Dorsolateral prefrontal cortex (tissue), 120 donors: ENCODE measurements at regions of chr1 and their contacts with region 1.

Region 1: GRCh38 chr1:39973503-39974135 is 18.7 kb downstream of the MFSD2A start:
- DNase-seq: peak; percentile 71 to 88 (median 80)
- H3K4me3 ChIP-seq: peak overlapping the region in 21 of 59 donors; percentile 5 to 55 (median 25)
- H3K27ac ChIP-seq: no peak overlapping the region
- H3K27me3 ChIP-seq: no peaks in the 10 kb centered on the region
- CTCF ChIP-seq: peak; percentile 93 to 100 (median 98)

Region 2: DNA sequence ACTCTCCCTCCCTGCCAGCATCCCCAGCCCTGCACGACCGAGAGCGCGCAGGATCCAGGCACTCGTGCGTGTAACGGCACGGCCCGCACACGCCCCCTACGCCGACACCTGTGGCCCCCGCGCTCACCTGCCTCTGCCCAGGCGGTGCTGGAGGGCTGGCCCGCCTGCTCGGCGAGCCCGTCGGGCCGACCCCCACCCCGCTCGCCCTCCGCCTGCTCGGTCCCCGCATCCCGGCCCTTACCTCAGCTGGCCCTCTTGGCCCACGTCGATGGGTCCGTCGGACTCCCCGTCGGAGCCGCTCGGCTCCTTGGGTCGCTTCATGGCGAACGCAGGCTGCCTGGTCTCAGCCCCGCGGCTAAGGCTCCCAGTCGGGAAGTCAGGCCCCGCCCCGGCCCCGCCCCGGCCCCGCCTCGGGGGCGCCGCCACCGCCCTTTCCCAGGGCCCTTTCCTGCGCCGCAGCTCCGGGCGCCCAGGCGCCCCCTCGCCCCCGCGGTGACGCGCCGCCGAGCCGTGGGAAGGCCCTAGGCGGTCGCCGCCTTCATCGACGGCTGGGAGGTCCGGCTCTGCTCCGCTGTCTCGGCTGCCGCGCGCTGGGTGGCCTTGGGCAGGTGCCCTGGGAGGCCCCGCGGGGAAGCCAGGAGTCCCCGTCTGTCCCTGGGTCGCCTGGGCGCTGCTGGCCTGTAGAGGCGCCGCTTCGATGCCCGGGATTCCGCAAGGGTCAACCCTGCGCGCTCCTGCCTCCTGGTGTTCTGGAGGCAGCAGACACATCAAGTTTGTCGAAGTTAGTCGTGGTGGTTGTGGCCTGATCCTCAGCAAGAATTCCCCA is 334.1 kb before region 1 on chr1 and contains the start of gene HEYL:
- intact Hi-C with region 1: no loop called
- DNase-seq: no peak
- H3K4me3 ChIP-seq: peak within 1 kb of the TSS in 55 of 59 donors; percentile 1 to 61 (median 41)
- H3K27ac ChIP-seq: peak within 1 kb of the TSS in 24 of 59 donors; percentile 3 to 70 (median 46)
- H3K27me3 ChIP-seq: peaks cover 0 to 38% (median 10%) of the 10 kb centered on the region in 45 donors
- CTCF ChIP-seq: peak in 14 of 56 donors; percentile 10 to 41 (median 18)
- total RNA-seq, gene HEYL: 1.6 to 14.9 (median 4.3) TPM

Region 3: GRCh38 chr1:39788758-39789570 is 184.7 kb before region 1 on chr1 and contains the start of gene BMP8B:
- intact Hi-C with region 1: no loop called
- DNase-seq: peak in 9 of 10 donors; percentile 19 to 67 (median 42)
- H3K4me3 ChIP-seq: peak within 1 kb of the TSS in 58 of 59 donors; percentile 28 to 71 (median 56)
- H3K27ac ChIP-seq: peak within 1 kb of the TSS in 12 of 59 donors; percentile 0 to 90 (median 70)
- H3K27me3 ChIP-seq: peaks cover 0 to 24% (median 7%) of the 10 kb centered on the region in 45 donors
- CTCF ChIP-seq: no peak
- total RNA-seq, gene BMP8B: 0.96 to 8.4 (median 3.1) TPM

Region 4: GRCh38 chr1:39816415-39817090 is 157.1 kb before region 1 on chr1:
- intact Hi-C with region 1: loop called (anchors 1 kb)
- DNase-seq: peak in 9 of 10 donors; percentile 46 to 78 (median 64)
- H3K4me3 ChIP-seq: no peak overlapping the region
- H3K27ac ChIP-seq: no peak overlapping the region
- H3K27me3 ChIP-seq: no peaks in the 10 kb centered on the region
- CTCF ChIP-seq: peak; percentile 59 to 91 (median 84)

Region 5: GRCh38 chr1:39901698-39902459 is 71.7 kb before region 1 on chr1 and contains the start of gene MYCL:
- intact Hi-C with region 1: loop called in 1 of 2 experiments (anchors 5 kb)
- DNase-seq: peak; percentile 59 to 82 (median 78)
- H3K4me3 ChIP-seq: peak within 1 kb of the TSS; percentile 57 to 88 (median 75)
- H3K27ac ChIP-seq: peak within 1 kb of the TSS in 31 of 59 donors; percentile 0 to 78 (median 42)
- H3K27me3 ChIP-seq: no peaks in the 10 kb centered on the region
- CTCF ChIP-seq: peak in 55 of 56 donors; percentile 45 to 86 (median 70)
- total RNA-seq, gene MYCL: 0.88 to 5.6 (median 2.3) TPM

Region 6: GRCh38 chr1:39919545-39919944 is 54.1 kb before region 1 on chr1:
- intact Hi-C with region 1: loop called (anchors 1 to 5 kb)
- DNase-seq: peak in 6 of 10 donors; percentile 35 to 56 (median 46)
- H3K4me3 ChIP-seq: no peak overlapping the region
- H3K27ac ChIP-seq: no peak overlapping the region
- H3K27me3 ChIP-seq: no peaks in the 10 kb centered on the region
- CTCF ChIP-seq: peak; percentile 48 to 80 (median 66)

Region 7: GRCh38 chr1:39954816-39955546 is 18.6 kb before region 1 on chr1 and contains the start of gene MFSD2A:
- intact Hi-C with region 1: loop called in 1 of 2 experiments (anchors 2 kb)
- DNase-seq: peak; percentile 88 to 98 (median 94)
- H3K4me3 ChIP-seq: peak within 1 kb of the TSS; percentile 47 to 90 (median 72)
- H3K27ac ChIP-seq: peak within 1 kb of the TSS in 56 of 59 donors; percentile 31 to 93 (median 75)
- H3K27me3 ChIP-seq: no peaks in the 10 kb centered on the region
- CTCF ChIP-seq: peak in 7 of 56 donors; percentile 10 to 43 (median 16)
- total RNA-seq, gene MFSD2A: 6.7 to 62.3 (median 20.8) TPM

Region 8: GRCh38 chr1:40032240-40032891 is 58.7 kb after region 1 on chr1:
- intact Hi-C with region 1: loop called in 1 of 2 experiments (anchors 5 kb)
- DNase-seq: peak in 7 of 10 donors; percentile 37 to 82 (median 61)
- H3K4me3 ChIP-seq: no peak overlapping the region
- H3K27ac ChIP-seq: peak overlapping the region in 9 of 59 donors; percentile 0 to 67 (median 41)
- H3K27me3 ChIP-seq: no peaks in the 10 kb centered on the region
- CTCF ChIP-seq: peak; percentile 42 to 85 (median 70)